PC-3 (cell line): ENCODE measurements at regions of chr11 and their contacts with region 1.

Region 1: DNA sequence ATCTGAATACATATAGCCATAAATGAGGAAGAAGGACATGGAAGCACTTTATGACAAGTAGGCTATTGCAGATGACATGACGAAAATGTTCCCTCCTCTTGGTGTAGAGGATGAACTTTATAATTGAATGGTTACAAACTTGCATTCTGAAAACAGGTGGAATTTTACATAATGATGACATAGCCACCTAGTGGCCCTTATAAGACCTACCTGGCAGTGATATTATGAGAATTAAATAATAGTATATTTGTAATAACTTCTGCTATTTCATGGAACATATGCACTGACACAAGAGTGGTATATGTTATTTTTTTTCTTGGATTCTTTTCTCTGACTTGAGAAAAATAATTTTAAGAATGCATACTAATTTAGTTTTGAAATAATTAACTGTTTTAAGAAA is 22.9 kb downstream of the TRIM22 start:
- DNase-seq: peak; percentile 52
- ATAC-seq: peak; percentile 43
- H3K4me3 ChIP-seq: no peak overlapping the region
- H3K27ac ChIP-seq: no peak overlapping the region
- H3K4me1 ChIP-seq: no peaks in the 10 kb centered on the region
- H3K27me3 ChIP-seq: peaks cover 9% of the 10 kb centered on the region
- CTCF ChIP-seq: peak; percentile 60

Region 2: DNA sequence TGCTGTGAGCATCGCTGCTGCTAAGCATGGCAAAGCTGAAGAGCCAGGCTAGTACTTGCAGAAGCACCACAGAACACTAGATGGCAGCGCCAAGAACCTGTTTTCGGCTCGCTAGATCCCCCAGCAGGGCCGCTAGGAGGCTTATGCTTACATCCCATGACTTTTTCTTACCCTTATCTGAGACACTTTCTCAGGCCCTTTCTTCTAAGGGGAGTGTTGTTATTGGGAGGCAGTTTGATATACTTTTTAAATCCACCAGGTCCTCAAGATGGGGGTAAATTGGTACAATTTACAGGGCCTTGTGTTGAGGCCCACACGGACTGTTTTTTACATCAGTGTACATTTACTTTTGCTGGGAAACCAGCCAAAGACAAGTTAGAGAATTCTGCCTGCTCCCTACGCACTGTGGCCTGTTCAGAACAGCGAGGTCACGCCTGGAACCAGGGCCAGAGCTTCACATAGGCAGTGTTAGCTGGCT is 112.1 kb before region 1 on chr11:
- CTCF ChIA-PET with region 1: no interaction called
- POLR2A ChIA-PET with region 1: no interaction called
- intact Hi-C with region 1: loop called (anchors 1 kb)
- DNase-seq: peak; percentile 72
- ATAC-seq: peak; percentile 65
- H3K4me3 ChIP-seq: no peak overlapping the region
- H3K27ac ChIP-seq: no peak overlapping the region
- H3K4me1 ChIP-seq: peaks cover 20% of the 10 kb centered on the region
- H3K27me3 ChIP-seq: no peaks in the 10 kb centered on the region
- CTCF ChIP-seq: peak; percentile 79

Region 3: GRCh38 chr11:5679811-5680210 is 32.7 kb before region 1 on chr11:
- CTCF ChIA-PET with region 1: no interaction called
- POLR2A ChIA-PET with region 1: no interaction called
- intact Hi-C with region 1: no loop called
- DNase-seq: no peak
- ATAC-seq: no peak
- H3K4me3 ChIP-seq: no peak overlapping the region
- H3K27ac ChIP-seq: no peak overlapping the region
- H3K4me1 ChIP-seq: peaks cover 6% of the 10 kb centered on the region
- H3K27me3 ChIP-seq: no peaks in the 10 kb centered on the region
- CTCF ChIP-seq: no peak